Calu3 (cell line): ENCODE measurements at regions of chr10 and their contacts with region 1.

Region 1: GRCh38 chr10:115355162-115355760 is 262.1 kb downstream of the ATRNL1 start:
- DNase-seq: peak; percentile 55
- H3K4me3 Mint-ChIP-seq: no peak overlapping the region
- H3K27ac Mint-ChIP-seq: no peak overlapping the region
- H3K4me1 Mint-ChIP-seq: no peaks in the 10 kb centered on the region
- H3K27me3 Mint-ChIP-seq: no peaks in the 10 kb centered on the region
- CTCF ChIP-seq: peak; percentile 51

Region 2: DNA sequence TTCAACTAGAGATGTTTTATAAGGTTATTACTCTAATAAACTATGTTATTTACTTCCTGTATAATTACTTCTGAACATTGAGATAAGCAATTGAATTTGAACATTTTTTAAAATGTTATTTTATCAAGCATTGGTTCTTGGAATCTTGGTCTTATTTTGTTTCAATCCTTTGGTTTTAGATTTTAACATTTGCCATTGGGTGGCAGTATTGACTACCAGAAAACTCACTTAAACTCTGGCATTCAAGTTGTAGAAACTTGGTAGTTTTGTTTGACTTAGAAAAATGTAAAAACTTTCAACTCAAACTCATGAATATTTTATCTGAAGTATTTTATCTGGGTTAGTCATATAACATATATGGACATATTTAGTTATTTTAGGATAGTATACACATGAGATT is 214.0 kb before region 1 on chr10:
- CTCF ChIA-PET with region 1: no interaction called
- intact Hi-C with region 1: loop called (anchors 5 kb)
- DNase-seq: no peak
- H3K4me3 Mint-ChIP-seq: no peak overlapping the region
- H3K27ac Mint-ChIP-seq: no peak overlapping the region
- H3K4me1 Mint-ChIP-seq: no peaks in the 10 kb centered on the region
- H3K27me3 Mint-ChIP-seq: peaks cover 19% of the 10 kb centered on the region
- CTCF ChIP-seq: no peak

Region 3: GRCh38 chr10:115171392-115171960 is 183.8 kb before region 1 on chr10:
- CTCF ChIA-PET with region 1: no interaction called
- intact Hi-C with region 1: loop called (anchors 5 kb)
- DNase-seq: no peak
- H3K4me3 Mint-ChIP-seq: no peak overlapping the region
- H3K27ac Mint-ChIP-seq: no peak overlapping the region
- H3K4me1 Mint-ChIP-seq: peaks cover 9% of the 10 kb centered on the region
- H3K27me3 Mint-ChIP-seq: no peaks in the 10 kb centered on the region
- CTCF ChIP-seq: peak; percentile 13

Region 4: GRCh38 chr10:115321360-115321759 is 33.9 kb before region 1 on chr10:
- CTCF ChIA-PET with region 1: no interaction called
- intact Hi-C with region 1: no loop called
- DNase-seq: no peak
- H3K4me3 Mint-ChIP-seq: peak overlapping the region; percentile 22
- H3K27ac Mint-ChIP-seq: peak overlapping the region; percentile 43
- H3K4me1 Mint-ChIP-seq: peaks cover 13% of the 10 kb centered on the region
- H3K27me3 Mint-ChIP-seq: no peaks in the 10 kb centered on the region
- CTCF ChIP-seq: no peak

Region 5: GRCh38 chr10:115417585-115418265 is 62.5 kb after region 1 on chr10:
- CTCF ChIA-PET with region 1: no interaction called
- intact Hi-C with region 1: loop called (anchors 1 kb)
- DNase-seq: peak; percentile 51
- H3K4me3 Mint-ChIP-seq: no peak overlapping the region
- H3K27ac Mint-ChIP-seq: no peak overlapping the region
- H3K4me1 Mint-ChIP-seq: no peaks in the 10 kb centered on the region
- H3K27me3 Mint-ChIP-seq: no peaks in the 10 kb centered on the region
- CTCF ChIP-seq: peak; percentile 66

Region 6: GRCh38 chr10:116287906-116288501 is 932.7 kb after region 1 on chr10:
- CTCF ChIA-PET with region 1: no interaction called
- intact Hi-C with region 1: loop called (anchors 2 kb)
- DNase-seq: peak; percentile 23
- H3K4me3 Mint-ChIP-seq: no peak overlapping the region
- H3K27ac Mint-ChIP-seq: no peak overlapping the region
- H3K4me1 Mint-ChIP-seq: no peaks in the 10 kb centered on the region
- H3K27me3 Mint-ChIP-seq: peaks cover 45% of the 10 kb centered on the region
- CTCF ChIP-seq: no peak

Region 7: DNA sequence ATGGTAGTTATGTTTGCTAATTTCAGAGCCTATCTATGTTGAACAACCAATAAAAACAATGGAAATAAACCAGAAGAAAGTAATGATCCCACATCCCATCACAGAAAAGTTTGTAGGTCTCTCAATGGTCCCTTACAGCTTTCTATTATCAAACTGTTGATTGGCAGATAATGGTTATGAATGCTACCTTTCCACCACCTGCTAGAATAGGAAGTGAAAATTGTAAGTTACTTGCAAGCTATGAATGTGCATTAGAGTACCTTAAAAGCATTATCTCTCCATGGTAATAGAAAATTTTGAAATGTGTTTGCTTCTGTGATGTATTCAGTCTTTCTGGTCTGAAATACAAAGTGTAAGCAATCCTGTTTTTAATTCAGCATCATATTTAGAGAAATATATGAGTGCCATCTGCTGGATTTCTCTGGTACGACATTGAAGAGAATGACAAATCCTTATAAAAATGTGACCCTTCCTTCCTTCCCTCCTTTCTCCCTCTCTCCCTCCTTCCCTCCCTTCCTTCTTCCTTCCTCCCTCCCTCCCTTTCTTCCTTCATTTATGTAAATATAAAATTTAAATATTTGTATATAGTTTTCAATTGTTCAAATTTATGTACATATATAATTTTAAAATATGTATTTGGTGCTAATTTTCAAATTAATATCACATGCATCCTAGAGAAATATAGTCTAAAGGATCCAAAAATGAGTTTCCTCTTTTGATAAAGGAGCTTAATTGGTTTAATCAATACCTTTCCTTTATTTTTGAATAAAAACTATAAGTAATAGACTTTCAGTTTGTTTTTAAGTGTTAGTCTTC is 1030.9 kb after region 1 on chr10:
- CTCF ChIA-PET with region 1: no interaction called
- intact Hi-C with region 1: loop called (anchors 5 kb)
- DNase-seq: peak; percentile 5
- H3K4me3 Mint-ChIP-seq: no peak overlapping the region
- H3K27ac Mint-ChIP-seq: no peak overlapping the region
- H3K4me1 Mint-ChIP-seq: no peaks in the 10 kb centered on the region
- H3K27me3 Mint-ChIP-seq: peaks cover 24% of the 10 kb centered on the region
- CTCF ChIP-seq: peak; percentile 18